ENCODE measurements at regions of chr2 and their contacts with region 1.

Region 1: DNA sequence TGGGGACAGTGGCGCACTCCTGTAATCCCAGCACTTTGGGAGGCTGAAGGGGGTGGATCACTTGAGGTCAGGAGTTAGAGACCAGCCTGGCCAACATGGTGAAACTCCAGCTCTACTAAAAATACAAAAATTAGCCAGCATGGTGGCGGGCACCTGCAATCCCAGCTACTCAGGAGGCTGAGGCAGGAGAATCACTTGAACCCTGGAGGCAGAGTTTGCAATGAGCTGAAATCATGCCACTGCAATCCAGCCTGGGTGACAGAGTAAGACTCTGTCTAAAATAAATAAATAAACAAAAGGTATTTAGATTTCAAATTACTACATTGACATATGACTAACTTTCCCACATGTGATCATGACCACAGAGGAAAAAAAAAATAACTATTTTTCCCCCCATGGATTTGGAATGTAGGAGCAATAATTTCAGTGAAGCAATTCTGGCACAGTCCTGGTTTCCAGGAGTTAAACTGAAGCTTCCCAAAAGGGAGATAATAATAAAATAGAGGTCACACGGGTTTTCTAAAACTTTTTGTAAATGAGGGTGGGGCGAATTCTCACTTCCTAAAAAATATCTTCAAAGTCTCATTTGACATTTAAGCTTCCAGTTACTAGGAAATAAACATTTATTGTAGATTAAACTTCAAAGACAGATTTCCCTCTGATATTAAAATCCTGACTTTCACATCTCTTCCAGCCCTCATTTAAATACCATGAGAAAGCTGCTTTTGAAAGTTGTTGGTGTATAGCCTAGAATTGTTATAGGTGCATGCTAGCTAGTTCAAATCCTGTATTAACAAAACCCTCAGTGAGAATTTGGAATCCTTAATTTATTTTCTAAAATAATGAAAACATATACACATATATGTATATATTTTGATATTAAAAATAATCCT is 20.8 kb downstream of the SLC19A3 start:
- DNase-seq: no peak
- ATAC-seq: no peak
- H3K4me3 Mint-ChIP-seq: no peak overlapping the region
- H3K27ac Mint-ChIP-seq: no peak overlapping the region
- H3K4me1 Mint-ChIP-seq: no peaks in the 10 kb centered on the region
- H3K27me3 Mint-ChIP-seq: no peaks in the 10 kb centered on the region
- CTCF ChIP-seq: no peak

Region 2: DNA sequence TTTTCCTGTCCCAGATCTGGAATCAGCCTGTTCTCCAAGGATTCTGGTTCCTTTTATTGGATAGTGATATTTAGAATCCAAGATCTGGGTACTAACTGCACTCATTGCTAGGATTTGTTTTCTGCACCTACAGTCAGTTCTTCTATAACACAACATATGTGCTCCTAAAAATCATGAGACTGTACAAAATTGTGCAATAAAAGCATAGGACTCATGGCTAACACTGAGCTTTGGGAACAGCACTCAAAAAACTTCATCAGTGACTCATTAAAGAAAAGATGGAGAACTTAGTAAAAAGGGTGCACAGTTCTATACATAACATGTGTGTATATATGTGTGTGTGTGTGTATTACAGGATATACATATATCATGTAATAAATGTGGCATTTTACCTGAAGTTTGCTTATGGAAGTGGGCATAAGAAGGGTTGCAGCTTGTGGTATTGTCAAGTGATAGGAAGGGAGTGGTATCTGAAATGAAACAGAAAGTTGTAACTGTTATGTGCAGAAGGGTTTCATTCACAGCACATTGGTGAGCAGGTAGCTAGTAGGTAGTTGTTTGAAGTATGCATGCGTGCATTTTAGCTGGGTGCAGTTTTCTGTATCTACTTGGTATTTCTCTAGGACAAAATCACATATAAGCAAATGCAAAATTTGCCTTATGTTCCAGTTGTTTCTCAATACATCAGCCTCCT is 104.2 kb before region 1 on chr2:
- CTCF ChIA-PET with region 1: no interaction called
- POLR2A ChIA-PET with region 1: no interaction called
- DNase-seq: no peak
- ATAC-seq: no peak
- H3K4me3 Mint-ChIP-seq: no peak overlapping the region
- H3K27ac Mint-ChIP-seq: no peak overlapping the region
- H3K4me1 Mint-ChIP-seq: peaks cover 9% of the 10 kb centered on the region
- H3K27me3 Mint-ChIP-seq: no peaks in the 10 kb centered on the region; the same call in 1 of the 2 replicates
- CTCF ChIP-seq: no peak

Region 3: DNA sequence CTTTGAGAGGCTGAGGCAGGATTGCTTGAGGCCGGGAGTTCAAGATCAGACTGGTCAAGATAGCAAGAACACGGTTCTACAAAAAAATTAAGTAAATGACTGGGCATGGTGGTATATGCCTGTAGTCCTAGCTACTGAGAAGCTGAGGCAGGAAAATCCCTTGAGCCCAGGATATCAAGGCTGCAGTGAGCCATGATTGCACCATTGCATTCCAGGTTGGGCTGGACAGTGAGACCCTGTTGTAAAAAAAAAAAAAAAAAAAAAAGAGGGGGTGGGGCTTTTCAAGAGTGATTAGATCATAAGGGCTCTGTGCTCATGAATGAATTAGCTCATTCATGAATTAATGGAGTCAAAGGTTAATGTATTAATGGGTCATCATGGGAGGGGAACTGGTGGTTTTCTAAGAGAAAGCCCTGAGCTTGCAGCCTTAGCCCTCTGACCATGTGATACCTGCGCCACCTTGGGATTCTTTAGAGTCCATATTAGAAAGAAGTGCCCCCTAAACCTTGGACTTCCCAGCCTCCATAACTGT is 16.2 kb after region 1 on chr2:
- CTCF ChIA-PET with region 1: no interaction called
- POLR2A ChIA-PET with region 1: interaction called, 10 read pairs
- DNase-seq: no peak
- ATAC-seq: no peak
- H3K4me3 Mint-ChIP-seq: no peak overlapping the region
- H3K27ac Mint-ChIP-seq: no peak overlapping the region
- H3K4me1 Mint-ChIP-seq: peaks cover 26% of the 10 kb centered on the region
- H3K27me3 Mint-ChIP-seq: 0 out of 2 replicates have a peak, but pooled peaks cover 3% of the 10 kb centered on the region
- CTCF ChIP-seq: no peak

Region 4: GRCh38 chr2:228039752-228040534 is 342.9 kb after region 1 on chr2:
- CTCF ChIA-PET with region 1: no interaction called
- POLR2A ChIA-PET with region 1: no interaction called
- DNase-seq: no peak
- ATAC-seq: peak; percentile 80
- H3K4me3 Mint-ChIP-seq: no peak overlapping the region
- H3K27ac Mint-ChIP-seq: no peak overlapping the region
- H3K4me1 Mint-ChIP-seq: no peaks in the 10 kb centered on the region
- H3K27me3 Mint-ChIP-seq: no peaks in the 10 kb centered on the region
- CTCF ChIP-seq: peak; percentile 57

Measured in WTC11 (cell line).